WTC11 (cell line): ENCODE measurements at regions of chr17 and their contacts with region 1.

Region 1: DNA sequence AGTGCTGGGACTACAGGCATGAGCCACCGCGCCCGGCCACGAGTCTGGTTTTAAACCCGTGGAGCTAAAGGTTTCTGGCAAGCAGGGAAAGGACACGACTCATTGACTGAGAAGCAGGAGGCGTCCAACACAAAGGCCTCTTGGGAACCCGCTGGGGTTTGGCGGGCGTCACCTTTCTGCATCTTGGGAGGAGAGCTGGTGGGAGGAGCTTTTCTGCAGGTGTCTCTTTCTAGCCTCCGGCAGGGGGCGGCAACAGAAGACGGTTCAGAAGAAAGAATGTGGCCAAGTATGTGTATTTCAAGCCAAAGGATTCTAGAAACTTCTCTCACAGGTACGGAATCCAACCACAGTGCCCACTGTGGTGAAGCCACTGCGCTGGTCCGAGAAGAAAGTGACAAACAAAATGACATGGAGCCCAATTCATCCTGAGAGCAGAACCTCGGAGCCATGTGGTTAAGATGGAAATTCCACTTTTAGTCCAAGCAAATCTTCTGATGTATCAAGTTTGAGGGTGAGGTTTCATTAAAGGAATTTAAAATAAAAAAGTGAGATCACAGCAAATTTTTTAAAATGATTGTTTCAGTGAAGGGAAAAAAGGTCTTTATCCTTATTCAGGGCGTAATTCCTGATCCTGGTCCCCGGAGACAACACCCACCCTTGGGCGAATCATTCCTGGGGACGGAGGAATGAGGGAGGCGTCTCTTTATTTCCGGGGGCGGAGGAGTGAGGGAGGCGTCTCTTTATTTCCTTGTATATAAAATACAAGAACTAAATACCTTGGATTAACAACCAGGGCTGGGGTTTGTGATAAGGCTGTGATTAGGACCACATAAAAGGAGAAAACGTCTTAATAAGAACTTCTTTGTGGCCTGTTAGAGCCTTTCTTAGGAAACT is 97.6 kb downstream of the MRM3 start:
- DNase-seq: peak; percentile 94
- ATAC-seq: peak; percentile 90
- H3K4me3 Mint-ChIP-seq: peak overlapping the region; percentile 21; the same call in 1 of the 2 replicates
- H3K27ac Mint-ChIP-seq: peak overlapping the region; percentile 97
- H3K4me1 Mint-ChIP-seq: peaks cover 67% of the 10 kb centered on the region
- H3K27me3 Mint-ChIP-seq: no peaks in the 10 kb centered on the region
- CTCF ChIP-seq: peak; percentile 59

Region 2: GRCh38 chr17:861364-861763 is 18.4 kb before region 1 on chr17:
- CTCF ChIA-PET with region 1: interaction called, 15 read pairs
- POLR2A ChIA-PET with region 1: no interaction called
- DNase-seq: no peak
- ATAC-seq: no peak
- H3K4me3 Mint-ChIP-seq: no peak overlapping the region
- H3K27ac Mint-ChIP-seq: peak overlapping the region; percentile 95; the same call in 1 of the 2 replicates
- H3K4me1 Mint-ChIP-seq: peaks cover 8% of the 10 kb centered on the region
- H3K27me3 Mint-ChIP-seq: no peaks in the 10 kb centered on the region
- CTCF ChIP-seq: no peak

Region 3: DNA sequence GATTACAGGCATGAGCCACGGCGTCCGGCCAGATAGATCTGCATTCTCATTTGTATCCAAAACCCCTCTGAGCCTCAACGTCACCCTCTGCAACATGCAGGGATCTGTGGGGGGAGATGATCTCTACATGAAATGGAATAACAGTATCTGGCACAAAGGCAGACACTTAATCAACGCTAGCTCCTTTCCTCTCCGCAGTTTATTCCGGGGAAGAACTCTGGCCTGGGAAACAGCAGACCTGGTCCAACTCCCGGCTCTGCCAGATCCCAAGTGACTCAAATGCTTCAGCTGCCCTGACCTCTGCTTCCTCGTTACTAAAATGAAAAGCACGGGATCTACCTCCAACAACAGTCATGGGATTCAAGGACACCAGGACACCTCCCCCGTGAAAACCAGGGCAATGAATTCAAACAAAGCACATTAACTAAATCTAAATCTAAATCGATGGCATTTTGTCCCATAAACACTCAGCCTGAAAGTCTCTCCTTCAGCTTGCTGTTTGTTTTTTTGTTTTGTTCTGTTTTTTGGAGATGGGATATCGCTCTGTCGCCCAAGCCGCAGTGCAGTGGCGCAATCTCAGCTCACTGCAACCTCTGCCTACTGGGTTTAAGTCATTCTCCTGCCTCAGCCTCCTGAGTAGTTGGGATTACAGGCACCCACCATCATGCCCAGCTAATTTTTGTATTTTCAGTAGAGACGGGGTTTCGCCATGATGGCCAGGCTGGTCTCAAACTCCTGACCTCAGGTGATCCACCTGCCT is 21.6 kb after region 1 on chr17:
- CTCF ChIA-PET with region 1: interaction called, 32 read pairs
- POLR2A ChIA-PET with region 1: interaction called, 4 read pairs
- DNase-seq: no peak
- ATAC-seq: peak; percentile 31
- H3K4me3 Mint-ChIP-seq: no peak overlapping the region
- H3K27ac Mint-ChIP-seq: peak overlapping the region; percentile 89
- H3K4me1 Mint-ChIP-seq: peaks cover 73% of the 10 kb centered on the region
- H3K27me3 Mint-ChIP-seq: no peaks in the 10 kb centered on the region
- CTCF ChIP-seq: no peak

Region 4: DNA sequence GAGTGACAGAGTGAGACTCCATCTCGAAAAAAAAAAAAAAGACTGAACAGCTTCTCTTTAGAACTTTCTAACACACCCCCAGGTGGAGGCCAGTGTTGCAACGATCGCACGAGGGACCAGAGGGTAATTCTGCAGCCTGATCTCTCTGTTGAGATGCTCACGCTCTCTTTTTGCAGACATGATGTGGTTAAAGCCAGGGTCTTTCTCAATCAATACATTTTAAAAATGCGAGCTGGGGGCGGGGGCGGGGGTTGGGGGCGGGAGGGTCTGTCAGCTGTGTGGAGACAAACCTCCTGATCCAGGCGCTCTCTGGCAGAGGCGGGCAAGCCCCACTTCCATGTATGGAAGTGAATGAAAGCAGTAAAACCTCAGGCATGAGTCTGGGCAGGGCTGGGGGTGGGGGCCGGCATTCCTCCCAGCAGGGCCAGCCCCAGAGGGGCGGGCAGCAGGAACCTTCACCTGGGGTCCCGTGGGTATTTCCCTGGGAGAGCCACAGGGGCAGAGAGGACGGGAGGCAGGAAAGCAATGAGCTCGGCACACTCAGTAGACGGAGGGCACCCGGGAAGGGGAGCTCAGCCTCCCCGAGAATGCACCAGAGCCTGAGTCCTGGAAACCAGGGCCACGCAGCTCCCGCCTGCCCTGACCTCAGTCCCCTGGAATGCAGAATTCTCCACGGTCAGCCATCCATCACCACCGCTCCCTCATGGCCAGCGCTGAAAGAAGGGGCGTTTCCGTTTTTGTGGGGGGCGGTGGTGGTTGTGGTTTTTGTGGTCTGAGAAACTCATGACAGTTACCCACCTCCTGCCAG is 71.7 kb after region 1 on chr17:
- CTCF ChIA-PET with region 1: interaction called, 29 read pairs
- POLR2A ChIA-PET with region 1: interaction called, 5 read pairs
- DNase-seq: peak; percentile 78
- ATAC-seq: peak; percentile 86
- H3K4me3 Mint-ChIP-seq: peak overlapping the region; percentile 41; the same call in 1 of the 2 replicates
- H3K27ac Mint-ChIP-seq: peak overlapping the region; percentile 91
- H3K4me1 Mint-ChIP-seq: peaks cover 41% of the 10 kb centered on the region
- H3K27me3 Mint-ChIP-seq: no peaks in the 10 kb centered on the region
- CTCF ChIP-seq: no peak

Region 5: GRCh38 chr17:973053-973452 is 93.3 kb after region 1 on chr17:
- CTCF ChIA-PET with region 1: interaction called, 11 read pairs
- POLR2A ChIA-PET with region 1: interaction called, 3 read pairs
- DNase-seq: peak; percentile 46
- ATAC-seq: peak; percentile 66
- H3K4me3 Mint-ChIP-seq: no peak overlapping the region
- H3K27ac Mint-ChIP-seq: peak overlapping the region; percentile 95
- H3K4me1 Mint-ChIP-seq: peaks cover 84% of the 10 kb centered on the region
- H3K27me3 Mint-ChIP-seq: no peaks in the 10 kb centered on the region
- CTCF ChIP-seq: no peak